ENCODE measurements at regions of chr3 and their contacts with region 1.

Region 1: DNA sequence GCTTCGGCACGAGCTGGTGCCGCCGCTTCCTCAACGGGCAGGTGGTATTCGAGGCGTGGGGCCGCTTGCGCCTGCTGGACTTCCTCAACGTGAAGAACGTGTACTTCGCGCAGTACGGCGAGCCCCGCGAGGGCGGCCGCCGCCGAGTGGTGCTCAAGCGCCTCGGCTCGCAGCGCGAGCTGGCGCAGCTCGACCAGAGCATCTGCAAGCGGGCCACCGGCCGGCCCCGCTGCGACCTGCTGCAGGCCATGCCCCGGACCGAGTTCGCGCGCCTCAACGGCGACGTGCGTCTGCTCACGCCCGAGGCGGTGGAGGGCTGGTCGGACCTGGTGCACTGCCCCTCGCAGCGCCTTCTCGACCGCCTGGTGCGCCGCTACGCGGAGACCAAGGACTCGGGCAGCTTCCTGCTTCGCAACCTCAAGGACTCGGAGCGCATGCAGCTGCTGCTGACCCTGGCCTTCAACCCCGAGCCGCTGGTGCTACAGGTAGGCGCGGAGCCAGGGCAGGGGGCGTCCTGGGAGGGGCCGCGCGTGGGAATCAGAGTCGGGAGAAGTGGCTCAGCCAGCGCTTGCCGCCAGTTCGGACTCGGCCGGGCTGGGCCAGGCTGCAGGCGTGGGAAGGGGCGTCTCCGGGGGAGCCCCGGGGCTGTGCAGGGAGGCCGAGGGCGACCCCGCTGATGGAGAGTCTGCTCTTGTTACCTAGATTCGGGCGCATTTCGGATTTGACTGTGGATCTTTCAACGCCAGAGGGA is 1.1 kb downstream of the DIPK2A start:
- DNase-seq: peak; percentile 57
- H3K4me3 Mint-ChIP-seq: peak overlapping the region; percentile 97
- H3K27ac Mint-ChIP-seq: peak overlapping the region; percentile 85
- H3K4me1 Mint-ChIP-seq: peaks cover 26% of the 10 kb centered on the region
- H3K27me3 Mint-ChIP-seq: peaks cover 21% of the 10 kb centered on the region

Region 2: GRCh38 chr3:142447852-142448823 is 1524.5 kb before region 1 on chr3 and contains the start of gene XRN1:
- intact Hi-C with region 1: loop called (anchors 5 kb)
- DNase-seq: peak; percentile 93
- H3K4me3 Mint-ChIP-seq: peak within 1 kb of the TSS; percentile 91
- H3K27ac Mint-ChIP-seq: peak within 1 kb of the TSS; percentile 96
- H3K4me1 Mint-ChIP-seq: peaks cover 21% of the 10 kb centered on the region
- H3K27me3 Mint-ChIP-seq: no peaks in the 10 kb centered on the region
- total RNA-seq, gene XRN1: 51.4 and 55.4 TPM in 2 replicates

Region 3: DNA sequence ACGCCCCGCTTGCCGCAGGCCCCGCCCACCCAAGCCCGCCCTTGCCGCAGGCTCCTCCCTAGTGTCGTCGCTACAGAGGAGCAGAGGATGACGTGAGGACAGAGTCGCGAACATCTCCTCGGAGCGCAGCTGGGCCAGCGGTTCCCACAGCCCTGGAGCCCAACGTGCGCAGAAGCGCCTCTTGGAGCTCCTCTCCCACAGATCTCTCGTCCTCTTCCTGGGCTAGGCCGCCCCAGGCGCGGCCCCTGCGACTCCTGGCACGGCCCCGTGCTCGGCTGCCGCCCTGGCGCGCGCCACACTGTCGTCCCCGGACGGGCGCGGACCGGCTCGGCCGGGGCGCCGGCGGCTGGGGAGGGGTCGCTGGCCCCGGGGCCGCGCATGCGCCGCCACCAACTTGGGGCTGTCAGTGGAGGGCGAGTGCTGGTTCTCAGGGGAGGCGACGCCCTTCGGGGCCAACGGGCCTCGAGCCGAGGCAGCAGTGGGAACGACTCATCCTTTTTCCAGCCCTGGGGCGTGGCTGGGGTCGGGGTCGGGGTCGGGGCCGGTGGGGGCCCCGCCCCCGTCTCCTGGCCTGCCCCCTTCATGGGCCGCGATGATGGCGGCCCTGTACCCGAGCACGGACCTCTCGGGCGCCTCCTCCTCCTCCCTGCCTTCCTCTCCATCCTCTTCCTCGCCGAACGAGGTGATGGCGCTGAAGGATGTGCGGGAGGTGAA is 1248.6 kb before region 1 on chr3 and contains the start of gene TRPC1:
- intact Hi-C with region 1: loop called (anchors 5 kb)
- DNase-seq: peak; percentile 76
- H3K4me3 Mint-ChIP-seq: peak within 1 kb of the TSS; percentile 86
- H3K27ac Mint-ChIP-seq: peak within 1 kb of the TSS; percentile 80
- H3K4me1 Mint-ChIP-seq: peaks cover 4% of the 10 kb centered on the region
- H3K27me3 Mint-ChIP-seq: peaks cover 56% of the 10 kb centered on the region
- total RNA-seq, gene TRPC1: 1.4 and 2.5 TPM in 2 replicates

Region 4: GRCh38 chr3:143165211-143165610 is 807.5 kb before region 1 on chr3:
- intact Hi-C with region 1: loop called (anchors 2 kb)
- DNase-seq: no peak
- H3K4me3 Mint-ChIP-seq: peak overlapping the region; percentile 59
- H3K27ac Mint-ChIP-seq: peak overlapping the region; percentile 90
- H3K4me1 Mint-ChIP-seq: peaks cover 70% of the 10 kb centered on the region
- H3K27me3 Mint-ChIP-seq: no peaks in the 10 kb centered on the region

Region 5: GRCh38 chr3:143831208-143831607 is 141.5 kb before region 1 on chr3:
- intact Hi-C with region 1: loop called (anchors 5 kb)
- DNase-seq: no peak
- H3K4me3 Mint-ChIP-seq: no peak overlapping the region
- H3K27ac Mint-ChIP-seq: no peak overlapping the region
- H3K4me1 Mint-ChIP-seq: peaks cover 32% of the 10 kb centered on the region
- H3K27me3 Mint-ChIP-seq: peaks cover 4% of the 10 kb centered on the region

Region 6: GRCh38 chr3:144294659-144295538 is 322.2 kb after region 1 on chr3:
- intact Hi-C with region 1: loop called (anchors 5 kb)
- DNase-seq: no peak
- H3K4me3 Mint-ChIP-seq: no peak overlapping the region
- H3K27ac Mint-ChIP-seq: no peak overlapping the region
- H3K4me1 Mint-ChIP-seq: peaks cover 21% of the 10 kb centered on the region
- H3K27me3 Mint-ChIP-seq: peaks cover 15% of the 10 kb centered on the region

Region 7: DNA sequence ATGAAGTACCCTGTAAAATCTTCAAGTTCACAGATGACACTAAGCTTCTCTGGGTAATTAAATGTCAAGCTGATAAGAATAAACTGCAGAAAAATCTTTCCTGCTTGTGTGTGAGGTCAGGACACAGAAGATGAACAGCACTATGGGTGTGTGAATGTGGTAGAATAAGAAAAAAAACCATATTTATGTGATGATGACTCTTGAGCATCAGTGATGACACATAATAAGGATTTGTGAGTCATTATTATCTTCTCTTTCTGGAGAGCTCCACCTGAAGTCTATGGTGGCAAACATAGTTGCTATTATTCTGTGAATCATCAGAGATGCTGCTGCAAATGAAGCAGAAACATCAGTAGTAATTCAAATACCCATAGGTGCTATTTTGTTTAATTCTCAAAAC is 421.4 kb after region 1 on chr3:
- intact Hi-C with region 1: no loop called
- DNase-seq: no peak
- H3K4me3 Mint-ChIP-seq: no peak overlapping the region
- H3K27ac Mint-ChIP-seq: no peak overlapping the region
- H3K4me1 Mint-ChIP-seq: no peaks in the 10 kb centered on the region
- H3K27me3 Mint-ChIP-seq: no peaks in the 10 kb centered on the region

Measured in activated T-helper 2 cell treated with anti-CD3 and anti-CD28 coated beads, Interferon-gamma antibody, Interleukin-2, Interleukin-4, amounts not matched to agents 10 μg/mL and 5 μg/mL and 100 μg/mL, durations not matched to agents 14 hours and 24 hours and 36 hours (primary cell).